ENCODE measurements at regions of chr5 and their contacts with region 1.

Region 1: GRCh38 chr5:175796536-175797499 is 74.6 kb upstream of the CPLX2 start:
- DNase-seq: peak; percentile 90
- ATAC-seq: peak; percentile 99
- H3K4me3 Mint-ChIP-seq: no peak overlapping the region
- H3K27ac Mint-ChIP-seq: no peak overlapping the region
- H3K4me1 Mint-ChIP-seq: peaks cover 4% of the 10 kb centered on the region
- H3K27me3 Mint-ChIP-seq: peaks cover 67% of the 10 kb centered on the region

Region 2: GRCh38 chr5:175765858-175766257 is 31.0 kb before region 1 on chr5:
- CTCF ChIA-PET with region 1: no interaction called
- POLR2A ChIA-PET with region 1: no interaction called
- intact Hi-C with region 1: no loop called
- DNase-seq: peak; percentile 20
- ATAC-seq: no peak
- H3K4me3 Mint-ChIP-seq: no peak overlapping the region
- H3K27ac Mint-ChIP-seq: no peak overlapping the region
- H3K4me1 Mint-ChIP-seq: peaks cover 6% of the 10 kb centered on the region
- H3K27me3 Mint-ChIP-seq: peaks cover 23% of the 10 kb centered on the region

Region 3: GRCh38 chr5:175873088-175873454 is 76.3 kb after region 1 on chr5:
- CTCF ChIA-PET with region 1: interaction called, 5 read pairs
- POLR2A ChIA-PET with region 1: interaction called, 3 read pairs
- intact Hi-C with region 1: loop called in 1 of 2 experiments (anchors 1 kb)
- DNase-seq: peak; percentile 55
- ATAC-seq: no peak
- H3K4me3 Mint-ChIP-seq: no peak overlapping the region
- H3K27ac Mint-ChIP-seq: no peak overlapping the region
- H3K4me1 Mint-ChIP-seq: peaks cover 4% of the 10 kb centered on the region
- H3K27me3 Mint-ChIP-seq: peaks cover 53% of the 10 kb centered on the region

Region 4: DNA sequence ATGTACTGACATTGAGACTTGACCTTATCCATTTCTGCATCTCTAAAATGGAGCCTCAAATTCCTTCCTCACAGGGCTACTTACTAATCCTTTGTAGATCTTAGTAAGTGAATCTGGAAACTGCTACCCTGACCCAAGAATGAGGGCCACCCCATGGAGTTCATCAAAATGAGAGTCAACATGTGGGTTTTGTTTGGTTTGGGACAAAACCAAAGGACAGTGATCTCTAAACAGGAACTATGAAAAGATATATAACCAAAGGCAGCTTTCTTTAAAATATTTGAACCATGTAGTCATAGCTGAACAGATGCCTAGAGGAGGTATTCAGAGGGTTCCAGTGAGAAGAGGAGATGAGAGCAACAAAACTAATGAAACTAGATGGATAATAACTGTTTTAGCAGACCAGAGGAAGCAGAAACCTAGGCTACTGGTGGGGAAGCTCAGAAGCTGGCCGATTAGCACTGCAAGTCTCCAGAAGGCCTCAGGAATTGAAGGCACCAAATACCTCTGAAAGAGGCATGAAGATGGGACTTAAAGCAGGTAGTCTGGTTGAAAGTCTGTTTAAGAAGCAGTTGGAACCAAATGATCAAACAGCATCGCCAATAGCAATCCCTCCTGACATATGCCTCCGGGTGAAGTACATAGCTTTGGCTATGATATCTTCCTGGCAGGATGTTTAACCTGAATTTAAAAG is 125.5 kb after region 1 on chr5:
- CTCF ChIA-PET with region 1: no interaction called
- POLR2A ChIA-PET with region 1: no interaction called
- intact Hi-C with region 1: no loop called
- DNase-seq: no peak
- ATAC-seq: no peak
- H3K4me3 Mint-ChIP-seq: no peak overlapping the region
- H3K27ac Mint-ChIP-seq: no peak overlapping the region
- H3K4me1 Mint-ChIP-seq: peaks cover 4% of the 10 kb centered on the region
- H3K27me3 Mint-ChIP-seq: no peaks in the 10 kb centered on the region

Measured in activated CD4-positive, alpha-beta T cell treated with anti-CD3 and anti-CD28 coated beads for 36 hours (primary cell).